Activated CD4-positive, alpha-beta T cell treated with anti-CD3 and anti-CD28 coated beads, Interleukin-2, amount 10 ng/mL, durations not matched to agents 24 days and 14 days (primary cell): ENCODE measurements at regions of chr14 and their contacts with region 1.

Region 1: DNA sequence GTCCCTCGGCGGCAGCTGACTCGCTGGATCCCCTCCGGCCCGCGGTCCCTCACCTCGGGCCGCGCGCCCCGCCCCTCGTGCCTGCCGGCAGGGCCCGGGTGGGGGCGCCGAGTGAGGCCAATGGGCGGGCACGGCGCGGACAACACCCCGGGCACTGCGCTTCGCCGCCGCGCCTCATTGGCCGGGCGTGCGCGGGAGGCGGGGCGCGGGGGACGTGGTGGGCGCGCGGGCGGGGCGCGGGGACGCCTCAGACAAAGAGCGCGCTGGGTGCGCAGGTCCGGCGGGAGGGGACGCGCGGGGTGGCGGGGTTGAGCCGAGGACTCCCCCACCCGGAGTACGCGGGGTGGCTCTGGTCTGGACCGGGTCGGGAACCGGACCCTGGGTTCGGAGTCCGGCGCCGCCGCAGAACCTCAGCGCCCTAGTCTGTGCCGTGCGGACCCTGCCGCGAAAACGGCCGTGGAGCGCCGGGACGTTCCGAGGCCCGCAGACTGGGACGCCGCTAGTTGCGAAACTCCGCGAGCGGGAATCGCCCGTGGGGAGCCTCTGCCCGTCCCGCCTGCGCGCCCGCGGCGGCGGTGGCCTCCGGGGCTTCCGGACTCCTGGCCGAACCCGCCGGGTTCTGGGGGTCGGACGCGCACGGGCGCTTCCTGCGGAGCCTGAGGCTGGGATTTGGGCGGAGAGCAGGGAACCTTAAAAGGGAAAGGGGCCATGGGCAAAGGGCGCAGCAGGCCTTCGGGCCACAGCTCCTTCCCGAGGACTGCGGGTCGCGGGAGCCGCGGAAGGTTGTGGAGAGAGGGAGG is at the start of gene SLC25A29:
- DNase-seq: peak; percentile 93
- H3K4me3 Mint-ChIP-seq: peak within 1 kb of the TSS; percentile 83
- H3K27ac Mint-ChIP-seq: peak within 1 kb of the TSS; percentile 25
- H3K4me1 Mint-ChIP-seq: peaks cover 13% of the 10 kb centered on the region
- H3K27me3 Mint-ChIP-seq: peaks cover 24% of the 10 kb centered on the region
- total RNA-seq, gene SLC25A29: 16.4 and 17.0 TPM in 2 replicates

Region 2: GRCh38 chr14:100285021-100285912 is 21.4 kb before region 1 on chr14:
- intact Hi-C with region 1: loop called (anchors 1 kb)
- DNase-seq: peak; percentile 95
- H3K4me3 Mint-ChIP-seq: peak overlapping the region; percentile 80
- H3K27ac Mint-ChIP-seq: no peak overlapping the region
- H3K4me1 Mint-ChIP-seq: peaks cover 10% of the 10 kb centered on the region
- H3K27me3 Mint-ChIP-seq: no peaks in the 10 kb centered on the region

Region 3: DNA sequence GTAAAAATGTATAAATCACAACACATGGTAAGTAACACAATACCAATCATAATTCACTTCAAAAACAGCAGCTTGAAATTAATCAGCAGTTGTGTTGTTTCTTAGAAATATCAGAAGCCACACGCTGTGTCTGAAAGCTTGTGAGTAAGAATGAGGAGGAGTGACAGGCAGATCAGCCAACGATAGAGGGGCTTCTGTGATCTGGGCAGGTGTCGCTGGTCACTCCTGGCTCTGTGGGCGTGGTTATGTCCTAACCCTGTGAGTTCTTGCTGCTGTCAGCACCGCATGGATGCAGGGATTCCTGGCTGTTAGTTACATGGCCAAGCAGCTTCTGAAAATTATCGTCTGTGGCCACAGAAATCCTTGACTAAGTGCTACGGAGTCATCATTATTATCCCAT is 140.0 kb after region 1 on chr14:
- intact Hi-C with region 1: no loop called
- DNase-seq: no peak
- H3K4me3 Mint-ChIP-seq: no peak overlapping the region
- H3K27ac Mint-ChIP-seq: no peak overlapping the region
- H3K4me1 Mint-ChIP-seq: peaks cover 15% of the 10 kb centered on the region
- H3K27me3 Mint-ChIP-seq: no peaks in the 10 kb centered on the region